CD4-positive, alpha-beta T cell (primary cell): ENCODE measurements at regions of chr16 and their contacts with region 1.

Region 1: DNA sequence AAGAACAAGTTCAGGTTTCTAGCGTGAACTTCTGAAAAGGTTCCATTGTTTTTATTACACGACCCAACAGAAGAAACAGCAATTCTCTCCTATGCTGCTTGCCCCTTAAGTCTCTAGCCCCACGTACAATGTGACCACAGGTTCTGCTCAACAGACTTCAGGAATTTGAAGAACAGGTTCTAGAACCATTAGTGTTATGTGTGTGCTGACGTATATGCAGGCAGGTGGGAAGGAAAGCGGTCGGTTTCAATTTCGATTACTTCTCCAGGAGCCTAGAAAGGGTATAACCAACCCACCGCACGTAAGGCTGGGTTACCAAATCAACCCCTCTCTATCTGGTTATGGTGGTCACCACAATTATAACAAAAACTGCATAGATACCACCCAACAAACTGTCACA is 39.4 kb downstream of the XPO6 start:
- DNase-seq: peak in 1 of 14 experiments; percentile 32
- ATAC-seq: no peak
- H3K4me3 ChIP-seq: no peak overlapping the region
- H3K4me3 Mint-ChIP-seq: no peak overlapping the region
- H3K27ac ChIP-seq: no peak overlapping the region
- H3K27ac Mint-ChIP-seq: peak overlapping the region; percentile 78
- H3K4me1 ChIP-seq: peaks cover 44% of the 10 kb centered on the region
- H3K4me1 Mint-ChIP-seq: peaks cover 83% of the 10 kb centered on the region
- H3K27me3 ChIP-seq: no peaks in the 10 kb centered on the region
- H3K27me3 Mint-ChIP-seq: no peaks in the 10 kb centered on the region
- CTCF ChIP-seq: no peak

Region 2: GRCh38 chr16:28110479-28110878 is 61.9 kb before region 1 on chr16:
- CTCF ChIA-PET with region 1: no interaction called
- POLR2A ChIA-PET with region 1: no interaction called
- intact Hi-C with region 1: no loop called
- DNase-seq: peak in 2 of 14 experiments; percentile 6 to 27
- ATAC-seq: no peak
- H3K4me3 ChIP-seq: no peak overlapping the region
- H3K4me3 Mint-ChIP-seq: no peak overlapping the region
- H3K27ac ChIP-seq: no peak overlapping the region
- H3K27ac Mint-ChIP-seq: peak overlapping the region; percentile 66
- H3K4me1 ChIP-seq: peaks cover 4% of the 10 kb centered on the region
- H3K4me1 Mint-ChIP-seq: peaks cover 24% of the 10 kb centered on the region
- H3K27me3 ChIP-seq: no peaks in the 10 kb centered on the region
- H3K27me3 Mint-ChIP-seq: no peaks in the 10 kb centered on the region
- CTCF ChIP-seq: no peak

Region 3: GRCh38 chr16:28188085-28188916 is 16.0 kb after region 1 on chr16:
- CTCF ChIA-PET with region 1: interaction called, 4 read pairs
- POLR2A ChIA-PET with region 1: interaction called, 15 read pairs
- intact Hi-C with region 1: loop called (anchors 1 to 2 kb)
- DNase-seq: peak in 3 of 14 experiments; percentile 43 to 54 (median 44)
- ATAC-seq: no peak
- H3K4me3 ChIP-seq: no peak overlapping the region
- H3K4me3 Mint-ChIP-seq: peak overlapping the region; percentile 76
- H3K27ac ChIP-seq: peak overlapping the region; percentile 67 to 81
- H3K27ac Mint-ChIP-seq: peak overlapping the region; percentile 93
- H3K4me1 ChIP-seq: peaks cover 78% of the 10 kb centered on the region
- H3K4me1 Mint-ChIP-seq: peaks cover 93% of the 10 kb centered on the region
- H3K27me3 ChIP-seq: no peaks in the 10 kb centered on the region
- H3K27me3 Mint-ChIP-seq: no peaks in the 10 kb centered on the region
- CTCF ChIP-seq: no peak